Breast epithelium (tissue), 4 donors: ENCODE measurements at regions of chr9 and their contacts with region 1.

Region 1: GRCh38 chr9:10548348-10548747 is 64.5 kb downstream of the PTPRD start:
- DNase-seq: no peak
- H3K4me3 ChIP-seq: no peak overlapping the region
- H3K27ac ChIP-seq: no peak overlapping the region
- H3K4me1 ChIP-seq: no peaks in the 10 kb centered on the region
- H3K27me3 ChIP-seq: no peaks in the 10 kb centered on the region
- CTCF ChIP-seq: no peak
- POLR2A ChIP-seq: no peak

Region 2: DNA sequence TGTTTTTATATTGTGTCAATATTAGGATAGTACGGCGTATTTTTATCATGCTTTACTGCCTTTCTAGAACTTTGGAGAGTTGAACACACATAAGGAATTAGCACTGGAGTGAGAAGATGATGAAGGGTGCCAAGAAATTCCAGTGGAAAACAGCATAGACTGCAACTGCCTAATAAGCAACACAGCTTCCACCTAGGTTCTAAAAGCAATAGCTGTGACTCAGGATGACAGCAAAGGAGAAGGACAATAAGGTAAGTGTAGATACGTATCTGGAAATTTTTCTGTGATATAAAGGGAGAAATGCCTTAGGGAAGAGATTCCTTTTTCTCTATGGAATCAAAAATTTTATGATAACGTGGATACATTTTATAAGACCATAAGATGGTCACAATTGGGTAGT is 57.0 kb after region 1 on chr9:
- intact Hi-C with region 1: loop called (anchors 5 kb)
- DNase-seq: no peak
- H3K4me3 ChIP-seq: no peak overlapping the region
- H3K27ac ChIP-seq: no peak overlapping the region
- H3K4me1 ChIP-seq: no peaks in the 10 kb centered on the region
- H3K27me3 ChIP-seq: peaks cover 0 to 11% of the 10 kb centered on the region in 2 donors
- CTCF ChIP-seq: no peak
- POLR2A ChIP-seq: no peak